IMR-90 (cell line): ENCODE measurements at regions of chr12 and their contacts with region 1.

Region 1: DNA sequence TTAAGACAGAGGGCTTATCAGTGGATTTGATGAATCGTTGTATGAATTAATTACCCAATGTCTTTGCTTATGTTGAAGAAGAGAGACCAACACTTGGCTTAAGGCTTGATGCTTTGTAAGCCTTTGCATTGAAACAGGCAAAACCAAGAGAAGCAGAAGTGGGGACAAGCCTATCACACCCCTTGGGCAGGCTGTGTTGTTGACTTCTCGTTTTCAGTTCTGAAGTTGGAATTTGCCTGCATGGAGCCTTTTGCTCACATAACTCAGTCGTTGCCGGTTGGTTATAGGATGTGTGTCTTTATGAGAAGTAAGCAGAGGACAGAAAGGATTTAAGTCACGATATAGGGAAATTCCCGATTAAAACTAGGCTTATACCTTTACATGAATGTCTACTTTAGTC is 94.7 kb downstream of the CCDC92 start:
- DNase-seq: no peak
- ATAC-seq: no peak
- H3K4me3 ChIP-seq: no peak overlapping the region
- H3K27ac ChIP-seq: no peak overlapping the region
- H3K4me1 ChIP-seq: no peaks in the 10 kb centered on the region
- H3K27me3 ChIP-seq: peaks cover 35% of the 10 kb centered on the region
- CTCF ChIP-seq: no peak
- POLR2A ChIP-seq: no peak
- RAD21 ChIP-seq: no peak

Region 2: DNA sequence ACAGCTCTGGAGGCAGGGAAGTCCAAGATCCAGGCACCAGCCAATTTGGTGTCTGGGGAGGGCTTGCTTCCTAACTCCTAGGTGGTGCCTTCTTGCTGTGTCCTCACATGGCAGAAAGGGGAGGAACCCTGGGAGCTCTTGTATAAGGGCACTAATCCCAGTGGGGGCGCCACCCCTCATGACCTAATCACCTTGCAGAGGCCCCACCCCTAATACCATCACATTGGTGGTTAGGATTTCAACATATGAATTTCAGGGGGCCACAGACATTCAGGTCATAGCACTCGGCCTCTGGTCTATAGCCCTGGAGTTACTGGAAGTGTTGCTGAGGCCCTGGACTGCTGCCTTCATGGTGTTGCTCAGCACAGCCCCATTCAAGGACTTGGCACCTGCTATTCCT is 1974.8 kb before region 1 on chr12:
- CTCF ChIA-PET with region 1: no interaction called
- POLR2A ChIA-PET with region 1: no interaction called
- dilution Hi-C with region 1: no loop called
- in situ Hi-C with region 1: no loop called
- intact Hi-C with region 1: no loop called
- DNase-seq: no peak
- ATAC-seq: no peak
- H3K4me3 ChIP-seq: no peak overlapping the region
- H3K27ac ChIP-seq: no peak overlapping the region
- H3K4me1 ChIP-seq: no peaks in the 10 kb centered on the region
- H3K27me3 ChIP-seq: no peaks in the 10 kb centered on the region
- CTCF ChIP-seq: no peak
- POLR2A ChIP-seq: no peak
- RAD21 ChIP-seq: no peak

Region 3: DNA sequence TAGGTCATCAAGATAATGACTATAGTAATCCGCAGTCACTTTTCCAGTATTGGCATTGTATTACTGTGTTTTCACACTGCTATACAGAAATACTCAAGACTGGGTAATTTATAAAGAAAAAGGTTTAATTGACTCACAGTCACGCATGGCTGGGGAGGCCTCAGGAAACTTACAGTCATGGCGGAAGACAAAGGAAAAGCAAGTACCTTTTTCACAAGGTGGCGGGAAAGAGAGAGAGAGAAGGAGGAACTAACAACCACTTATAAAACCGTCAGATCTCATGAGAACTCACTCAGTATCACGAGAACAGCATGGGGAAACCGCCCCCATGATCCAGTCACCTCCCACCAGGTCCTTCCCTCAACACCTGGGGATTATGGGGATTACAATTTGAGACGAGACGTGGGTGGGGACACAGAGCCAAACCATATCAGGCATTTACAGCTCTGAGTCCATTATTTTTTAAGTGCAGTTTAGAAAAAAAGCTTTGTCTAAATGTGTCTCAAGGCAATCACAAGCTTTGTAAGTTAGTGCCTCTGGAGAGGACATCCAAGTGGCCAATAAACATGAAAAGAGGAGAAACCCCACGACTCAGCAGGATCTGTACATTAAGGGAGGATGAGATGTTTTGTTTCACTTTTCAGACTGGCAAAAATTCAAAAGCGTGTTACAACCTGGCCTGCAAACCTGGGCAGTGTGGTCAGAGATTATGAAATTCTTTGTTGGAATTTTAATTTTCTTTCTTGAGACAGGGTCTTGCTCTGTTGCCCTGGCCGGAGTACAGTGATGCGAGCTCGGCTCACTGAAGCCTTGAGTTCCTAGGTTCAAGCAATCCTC is 33.8 kb before region 1 on chr12:
- CTCF ChIA-PET with region 1: no interaction called
- POLR2A ChIA-PET with region 1: no interaction called
- dilution Hi-C with region 1: no loop called
- in situ Hi-C with region 1: no loop called
- intact Hi-C with region 1: loop called (anchors 5 kb)
- DNase-seq: no peak
- ATAC-seq: no peak
- H3K4me3 ChIP-seq: no peak overlapping the region
- H3K27ac ChIP-seq: no peak overlapping the region
- H3K4me1 ChIP-seq: no peaks in the 10 kb centered on the region
- H3K27me3 ChIP-seq: peaks cover 10% of the 10 kb centered on the region
- CTCF ChIP-seq: no peak
- POLR2A ChIP-seq: no peak
- RAD21 ChIP-seq: no peak

Region 4: GRCh38 chr12:123942238-123942653 is 64.3 kb after region 1 on chr12:
- CTCF ChIA-PET with region 1: no interaction called
- POLR2A ChIA-PET with region 1: no interaction called
- dilution Hi-C with region 1: no loop called
- in situ Hi-C with region 1: no loop called
- intact Hi-C with region 1: no loop called
- DNase-seq: peak; percentile 90
- ATAC-seq: peak; percentile 56
- H3K4me3 ChIP-seq: no peak overlapping the region
- H3K27ac ChIP-seq: no peak overlapping the region
- H3K4me1 ChIP-seq: peaks cover 16% of the 10 kb centered on the region
- H3K27me3 ChIP-seq: no peaks in the 10 kb centered on the region
- CTCF ChIP-seq: no peak
- POLR2A ChIP-seq: no peak
- RAD21 ChIP-seq: no peak

Region 5: DNA sequence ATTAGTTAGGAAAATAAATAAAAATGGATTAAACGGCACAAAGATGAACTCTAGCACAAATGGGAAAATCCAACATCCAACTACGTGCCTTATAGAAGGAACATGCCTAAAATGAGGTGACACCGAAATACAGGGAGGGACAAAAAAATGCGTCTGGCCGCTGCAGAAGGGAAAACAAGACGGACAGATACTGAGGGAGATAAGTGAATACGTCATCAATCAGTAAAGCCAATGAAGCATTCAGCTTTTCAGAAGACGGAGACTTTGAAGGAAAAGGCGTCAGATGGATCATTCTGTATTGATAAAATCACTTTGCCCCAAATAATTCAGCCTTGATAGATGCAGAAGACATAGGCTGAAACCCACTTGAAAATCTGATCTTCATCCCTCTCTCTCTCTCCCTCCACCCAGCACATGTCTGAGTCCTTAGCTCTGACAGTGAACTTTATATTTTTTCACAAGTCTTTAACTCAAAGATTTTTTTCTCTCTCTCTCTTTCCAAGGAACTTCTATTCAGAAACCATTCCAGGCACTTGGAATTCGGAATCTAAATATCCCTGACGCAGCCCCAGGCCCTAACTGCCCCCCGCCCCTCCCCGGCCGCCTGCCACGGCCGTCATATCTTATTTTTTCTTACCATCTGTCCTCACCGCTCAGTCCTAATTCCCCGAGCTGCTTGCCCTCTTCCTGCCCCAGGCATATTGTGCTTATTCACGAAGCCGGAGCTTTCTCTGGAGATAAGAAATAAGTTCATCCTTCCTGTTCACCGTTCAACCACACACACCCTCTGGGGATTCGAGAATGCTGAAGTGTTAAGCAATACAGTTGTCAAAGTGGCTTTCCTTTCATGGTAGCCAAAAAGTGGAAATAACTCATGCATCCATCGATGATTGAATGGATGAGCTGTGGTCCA is 381.4 kb after region 1 on chr12:
- CTCF ChIA-PET with region 1: no interaction called
- POLR2A ChIA-PET with region 1: no interaction called
- dilution Hi-C with region 1: no loop called
- in situ Hi-C with region 1: no loop called
- intact Hi-C with region 1: no loop called
- DNase-seq: no peak
- ATAC-seq: no peak
- H3K4me3 ChIP-seq: no peak overlapping the region
- H3K27ac ChIP-seq: no peak overlapping the region
- H3K4me1 ChIP-seq: no peaks in the 10 kb centered on the region
- H3K27me3 ChIP-seq: peaks cover 59% of the 10 kb centered on the region
- CTCF ChIP-seq: no peak
- POLR2A ChIP-seq: no peak
- RAD21 ChIP-seq: no peak